ENCODE measurements at regions of chr2 and their contacts with region 1.

Region 1: GRCh38 chr2:73176881-73177644 is 25.3 kb upstream of the NOTO start:
- DNase-seq: peak; percentile 82 to 92 (median 90)
- H3K4me3 ChIP-seq: peak overlapping the region; percentile 33 to 75 (median 64)
- H3K27ac ChIP-seq: peak overlapping the region in 23 of 59 donors; percentile 6 to 76 (median 52)
- H3K27me3 ChIP-seq: peaks cover 0 to 42% (median 0%) of the 10 kb centered on the region in 45 donors
- CTCF ChIP-seq: peak; percentile 85 to 100 (median 99)

Region 2: GRCh38 chr2:73212448-73213176 is 35.5 kb after region 1 on chr2:
- intact Hi-C with region 1: loop called in 1 of 2 experiments (anchors 2 kb)
- DNase-seq: peak; percentile 47 to 78 (median 68)
- H3K4me3 ChIP-seq: peak overlapping the region in 2 of 59 donors; percentile 17 to 32
- H3K27ac ChIP-seq: peak overlapping the region in 35 of 59 donors; percentile 3 to 84 (median 47)
- H3K27me3 ChIP-seq: no peaks in the 10 kb centered on the region
- CTCF ChIP-seq: peak; percentile 71 to 95 (median 90)